CD4-positive, alpha-beta memory T cell (primary cell): ENCODE measurements at regions of chr15 and their contacts with region 1.

Region 1: GRCh38 chr15:38699633-38700230 is 135.1 kb upstream of the RASGRP1 start:
- DNase-seq: peak; percentile 61 to 73 (median 67)
- H3K4me3 ChIP-seq: no peak overlapping the region
- H3K4me3 Mint-ChIP-seq: peak overlapping the region in 5 of 8 donors; percentile 1 to 66 (median 35)
- H3K27ac ChIP-seq: peak overlapping the region; percentile 4
- H3K27ac Mint-ChIP-seq: peak overlapping the region; percentile 48 to 93 (median 86)
- H3K4me1 ChIP-seq: peaks cover 64% of the 10 kb centered on the region
- H3K4me1 Mint-ChIP-seq: peaks cover 38 to 58% (median 50%) of the 10 kb centered on the region in 4 donors
- H3K27me3 ChIP-seq: no peaks in the 10 kb centered on the region
- H3K27me3 Mint-ChIP-seq: no peaks in the 10 kb centered on the region

Region 2: GRCh38 chr15:38461066-38461833 is 238.5 kb before region 1 on chr15:
- CTCF ChIA-PET with region 1: interaction called, 17 read pairs
- POLR2A ChIA-PET with region 1: interaction called, 4 read pairs
- intact Hi-C with region 1: no loop called
- DNase-seq: no peak
- H3K4me3 ChIP-seq: no peak overlapping the region
- H3K4me3 Mint-ChIP-seq: no peak overlapping the region
- H3K27ac ChIP-seq: no peak overlapping the region
- H3K27ac Mint-ChIP-seq: peak overlapping the region in 1 of 7 donors; percentile 57
- H3K4me1 ChIP-seq: peaks cover 6% of the 10 kb centered on the region
- H3K4me1 Mint-ChIP-seq: peaks cover 33 to 54% (median 35%) of the 10 kb centered on the region in 4 donors
- H3K27me3 ChIP-seq: no peaks in the 10 kb centered on the region
- H3K27me3 Mint-ChIP-seq: no peaks in the 10 kb centered on the region

Region 3: GRCh38 chr15:38499651-38500050 is 200.1 kb before region 1 on chr15:
- CTCF ChIA-PET with region 1: interaction called, 13 read pairs
- POLR2A ChIA-PET with region 1: interaction called, 4 read pairs
- intact Hi-C with region 1: no loop called
- DNase-seq: no peak
- H3K4me3 ChIP-seq: no peak overlapping the region
- H3K4me3 Mint-ChIP-seq: peak overlapping the region in 1 of 8 donors; percentile 27
- H3K27ac ChIP-seq: no peak overlapping the region
- H3K27ac Mint-ChIP-seq: peak overlapping the region; percentile 73 to 92 (median 86)
- H3K4me1 ChIP-seq: peaks cover 5% of the 10 kb centered on the region
- H3K4me1 Mint-ChIP-seq: peaks cover 6 to 23% (median 14%) of the 10 kb centered on the region in 4 donors
- H3K27me3 ChIP-seq: no peaks in the 10 kb centered on the region
- H3K27me3 Mint-ChIP-seq: no peaks in the 10 kb centered on the region

Region 4: GRCh38 chr15:38536201-38536676 is 163.5 kb before region 1 on chr15:
- CTCF ChIA-PET with region 1: interaction called, 17 read pairs
- POLR2A ChIA-PET with region 1: interaction called, 5 read pairs
- intact Hi-C with region 1: no loop called
- DNase-seq: no peak
- H3K4me3 ChIP-seq: no peak overlapping the region
- H3K4me3 Mint-ChIP-seq: peak overlapping the region in 4 of 8 donors; percentile 14 to 73 (median 34)
- H3K27ac ChIP-seq: no peak overlapping the region
- H3K27ac Mint-ChIP-seq: peak overlapping the region in 6 of 7 donors; percentile 36 to 84 (median 59)
- H3K4me1 ChIP-seq: peaks cover 97% of the 10 kb centered on the region
- H3K4me1 Mint-ChIP-seq: peaks cover 83 to 100% (median 92%) of the 10 kb centered on the region in 4 donors
- H3K27me3 ChIP-seq: no peaks in the 10 kb centered on the region
- H3K27me3 Mint-ChIP-seq: no peaks in the 10 kb centered on the region

Region 5: DNA sequence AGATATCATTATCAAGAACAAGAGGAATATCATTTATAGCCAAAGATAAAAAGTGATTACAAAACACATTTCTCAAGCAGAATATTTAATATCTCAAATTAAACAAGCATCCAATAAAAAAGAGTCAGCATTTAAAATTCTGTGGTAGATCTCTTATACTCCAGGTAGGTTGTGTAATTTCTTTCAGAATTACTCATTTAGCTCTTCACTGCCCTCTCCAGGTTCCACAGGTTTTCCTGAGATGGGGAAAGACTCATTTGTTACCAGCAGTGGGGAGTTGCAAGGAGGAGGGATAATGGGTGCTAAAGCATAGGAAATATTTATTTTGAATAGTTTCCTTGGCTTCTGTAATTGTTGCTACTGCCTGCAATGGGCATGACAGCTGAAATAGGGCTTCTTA is 52.0 kb before region 1 on chr15:
- CTCF ChIA-PET with region 1: interaction called, 10 read pairs
- POLR2A ChIA-PET with region 1: interaction called, 25 read pairs
- intact Hi-C with region 1: no loop called
- DNase-seq: no peak
- H3K4me3 ChIP-seq: no peak overlapping the region
- H3K4me3 Mint-ChIP-seq: peak overlapping the region in 2 of 8 donors; percentile 6 to 52
- H3K27ac ChIP-seq: peak overlapping the region; percentile 4
- H3K27ac Mint-ChIP-seq: peak overlapping the region; percentile 70 to 96 (median 91)
- H3K4me1 ChIP-seq: peaks cover 81% of the 10 kb centered on the region
- H3K4me1 Mint-ChIP-seq: peaks cover 55 to 78% (median 68%) of the 10 kb centered on the region in 4 donors
- H3K27me3 ChIP-seq: no peaks in the 10 kb centered on the region
- H3K27me3 Mint-ChIP-seq: no peaks in the 10 kb centered on the region

Region 6: DNA sequence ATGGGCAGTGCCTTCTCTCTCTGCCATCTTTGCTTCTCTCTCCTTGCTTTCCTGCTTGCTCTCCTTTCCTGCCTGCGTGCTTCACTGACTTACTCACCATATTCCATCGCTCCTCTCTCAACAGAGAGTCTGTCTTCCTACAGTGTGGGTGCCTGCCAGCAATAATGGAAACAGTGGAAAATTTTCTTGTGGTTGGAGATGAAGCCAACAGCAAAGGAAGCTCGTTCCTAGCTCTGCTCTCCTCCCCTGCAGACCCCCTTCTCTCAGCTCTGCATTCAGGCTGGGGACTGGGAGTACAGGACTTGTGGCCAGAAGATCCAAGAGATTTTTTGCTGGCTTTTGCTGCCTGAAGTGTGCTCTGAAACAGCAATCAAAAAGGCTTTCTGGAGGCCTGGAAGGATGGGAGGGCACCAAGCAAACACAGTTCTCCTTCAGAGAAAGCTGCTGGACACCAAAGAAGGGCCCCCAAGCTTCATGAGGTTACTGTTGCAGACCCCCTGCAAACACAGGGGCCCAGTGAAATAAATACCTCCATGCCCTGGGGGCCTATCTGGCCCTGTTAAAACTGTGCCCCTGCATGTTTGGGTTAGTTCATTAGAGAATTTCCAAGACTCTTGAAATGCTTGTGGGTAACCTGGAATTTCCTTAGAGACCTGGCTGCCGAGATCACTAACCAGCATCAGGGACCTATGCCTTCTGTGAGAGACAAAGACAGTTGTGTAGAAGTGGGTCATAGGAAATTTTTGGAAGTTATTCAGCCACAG is 14.8 kb after region 1 on chr15:
- CTCF ChIA-PET with region 1: interaction called, 24 read pairs
- POLR2A ChIA-PET with region 1: no interaction called
- intact Hi-C with region 1: no loop called
- DNase-seq: no peak
- H3K4me3 ChIP-seq: no peak overlapping the region
- H3K4me3 Mint-ChIP-seq: no peak overlapping the region
- H3K27ac ChIP-seq: no peak overlapping the region
- H3K27ac Mint-ChIP-seq: no peak overlapping the region
- H3K4me1 ChIP-seq: no peaks in the 10 kb centered on the region
- H3K4me1 Mint-ChIP-seq: no peaks in the 10 kb centered on the region
- H3K27me3 ChIP-seq: no peaks in the 10 kb centered on the region
- H3K27me3 Mint-ChIP-seq: peaks cover 2% of the 10 kb centered on the region in 2 donors